Activated CD4-positive, alpha-beta T cell treated with anti-CD3 and anti-CD28 coated beads for 36 hours (primary cell): ENCODE measurements at regions of chr10 and their contacts with region 1.

Region 1: DNA sequence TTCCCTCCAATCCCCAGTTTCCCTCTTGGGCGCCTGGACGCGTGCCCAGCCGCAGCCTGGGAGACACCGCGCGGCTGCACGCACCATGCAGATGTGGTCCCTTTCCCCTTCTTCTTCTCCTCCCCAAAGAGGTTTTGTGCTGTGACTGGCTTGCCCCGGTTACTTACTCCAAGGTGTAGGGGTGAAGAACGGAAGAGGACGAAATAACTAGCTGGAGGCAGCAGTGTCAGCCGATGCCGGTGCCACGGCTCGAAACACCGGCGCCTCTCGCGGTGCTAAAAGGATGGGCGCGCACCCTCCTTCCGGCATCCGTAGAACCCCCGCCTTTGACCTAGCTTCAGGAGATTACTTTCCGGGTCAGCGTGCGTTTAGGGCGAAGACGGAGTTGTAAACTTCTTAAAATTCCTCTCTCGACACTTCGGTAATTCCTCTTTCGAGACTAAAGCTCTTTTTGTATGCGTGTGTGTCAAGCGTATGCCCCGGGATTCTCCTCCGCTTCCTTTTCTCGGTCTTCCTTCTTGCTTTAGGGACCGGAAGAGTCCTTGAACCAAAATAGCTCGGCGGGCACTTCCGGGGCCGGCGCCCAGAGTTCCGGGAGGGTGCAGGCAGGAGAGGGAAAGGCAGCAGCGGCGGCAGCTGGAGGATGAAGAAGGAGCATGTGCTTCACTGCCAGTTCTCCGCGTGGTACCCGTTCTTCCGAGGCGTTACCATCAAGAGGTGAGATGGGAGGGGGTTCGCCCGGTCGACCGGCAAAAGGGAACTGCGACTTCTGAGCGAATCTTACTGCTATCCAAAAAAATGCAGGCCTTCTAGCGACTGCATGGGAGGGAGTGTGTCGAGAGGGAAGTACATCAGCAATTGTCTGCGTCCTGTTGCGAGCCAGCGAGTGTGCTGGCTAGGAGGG is at the starts of genes CDC123 and NUDT5:
- DNase-seq: peak; percentile 94
- ATAC-seq: peak; percentile 94
- H3K4me3 Mint-ChIP-seq: peak within 1 kb of the TSS; percentile 96
- H3K27ac Mint-ChIP-seq: peak within 1 kb of the TSS; percentile 97
- H3K4me1 Mint-ChIP-seq: peaks cover 42% of the 10 kb centered on the region
- H3K27me3 Mint-ChIP-seq: no peaks in the 10 kb centered on the region
- total RNA-seq, gene CDC123: 129 to 151 TPM
- total RNA-seq, gene NUDT5: 99.9 to 108 TPM

Region 2: DNA sequence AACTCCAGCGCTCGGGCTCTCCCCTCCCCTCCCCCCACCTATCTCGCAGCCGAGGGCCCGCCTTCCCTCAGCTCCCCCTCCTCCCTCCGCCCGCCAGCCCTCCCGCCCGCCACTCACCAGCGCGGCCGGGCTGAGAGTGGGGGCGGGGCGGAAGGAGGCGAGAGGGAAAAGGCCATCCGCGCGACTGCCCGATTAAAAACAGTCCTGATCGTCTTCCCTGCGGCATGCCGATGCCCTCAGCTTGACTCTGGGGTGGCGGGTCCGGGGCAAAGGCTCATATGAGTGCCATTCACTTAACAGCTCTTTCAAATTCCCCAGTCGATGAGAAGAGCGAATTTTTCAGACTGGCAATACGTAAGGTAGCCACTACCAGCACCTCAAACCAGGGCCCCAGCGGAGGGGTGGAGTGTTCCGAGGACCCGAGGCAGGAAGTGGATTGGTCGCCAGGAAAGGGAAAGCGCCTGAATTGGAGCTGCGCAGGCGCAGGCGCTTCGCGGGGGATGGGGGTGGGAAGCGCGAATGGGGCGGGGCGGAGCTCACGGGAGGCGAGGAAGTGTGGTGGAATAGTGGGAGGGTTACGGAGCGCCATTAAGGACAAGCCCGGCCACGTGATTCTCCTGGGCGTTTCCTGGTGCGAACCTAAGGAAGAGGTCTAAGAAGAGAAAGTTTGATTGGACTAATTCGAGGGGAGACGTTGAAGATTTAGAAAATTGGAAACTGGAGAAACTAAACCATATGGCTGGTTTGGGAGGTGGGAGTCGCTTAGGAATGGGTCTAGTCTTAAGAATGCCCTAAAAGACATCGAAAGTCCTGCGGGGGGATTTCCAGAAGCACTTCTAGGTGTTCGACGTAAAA is 152.8 kb before region 1 on chr10 and contains the start of gene UPF2:
- CTCF ChIA-PET with region 1: interaction called, 7 read pairs
- POLR2A ChIA-PET with region 1: interaction called, 7 read pairs
- intact Hi-C with region 1: loop called (anchors 1 to 2 kb)
- DNase-seq: peak; percentile 99
- ATAC-seq: peak; percentile 90
- H3K4me3 Mint-ChIP-seq: peak within 1 kb of the TSS; percentile 99
- H3K27ac Mint-ChIP-seq: peak within 1 kb of the TSS; percentile 100
- H3K4me1 Mint-ChIP-seq: peaks cover 37% of the 10 kb centered on the region
- H3K27me3 Mint-ChIP-seq: peaks cover 2% of the 10 kb centered on the region
- total RNA-seq, gene UPF2: 34.2 to 46.8 TPM

Region 3: GRCh38 chr10:12129222-12130111 is 66.4 kb before region 1 on chr10 and contains the start of gene SEC61A2:
- CTCF ChIA-PET with region 1: interaction called, 3 read pairs
- POLR2A ChIA-PET with region 1: interaction called, 5 read pairs
- intact Hi-C with region 1: loop called (anchors 1 kb)
- DNase-seq: peak; percentile 99
- ATAC-seq: peak; percentile 96
- H3K4me3 Mint-ChIP-seq: peak within 1 kb of the TSS; percentile 81
- H3K27ac Mint-ChIP-seq: peak within 1 kb of the TSS; percentile 76
- H3K4me1 Mint-ChIP-seq: peaks cover 19% of the 10 kb centered on the region
- H3K27me3 Mint-ChIP-seq: no peaks in the 10 kb centered on the region
- total RNA-seq, gene SEC61A2: 11.3 to 12.0 TPM

Region 4: DNA sequence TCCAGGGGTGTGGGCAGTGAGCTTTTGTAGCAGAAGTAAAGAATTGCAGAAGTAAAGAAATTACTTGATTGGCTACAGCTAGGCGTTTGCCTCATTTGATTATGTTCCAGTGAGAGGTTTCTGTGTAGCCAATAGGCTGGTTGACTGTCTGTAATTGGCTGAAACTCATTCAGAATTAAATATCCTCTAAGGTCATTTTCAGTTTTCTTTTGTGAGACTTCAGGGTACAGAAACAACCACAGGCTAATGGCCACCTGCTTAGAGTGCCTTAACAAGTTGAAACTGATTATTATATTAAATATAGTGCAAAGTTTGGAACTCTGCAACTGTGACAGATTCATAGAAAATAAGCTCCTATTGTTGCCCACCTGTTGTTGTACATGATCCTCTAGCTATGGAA is 55.8 kb before region 1 on chr10:
- CTCF ChIA-PET with region 1: no interaction called
- POLR2A ChIA-PET with region 1: no interaction called
- intact Hi-C with region 1: no loop called
- DNase-seq: no peak
- ATAC-seq: no peak
- H3K4me3 Mint-ChIP-seq: no peak overlapping the region
- H3K27ac Mint-ChIP-seq: no peak overlapping the region
- H3K4me1 Mint-ChIP-seq: no peaks in the 10 kb centered on the region
- H3K27me3 Mint-ChIP-seq: no peaks in the 10 kb centered on the region

Region 5: DNA sequence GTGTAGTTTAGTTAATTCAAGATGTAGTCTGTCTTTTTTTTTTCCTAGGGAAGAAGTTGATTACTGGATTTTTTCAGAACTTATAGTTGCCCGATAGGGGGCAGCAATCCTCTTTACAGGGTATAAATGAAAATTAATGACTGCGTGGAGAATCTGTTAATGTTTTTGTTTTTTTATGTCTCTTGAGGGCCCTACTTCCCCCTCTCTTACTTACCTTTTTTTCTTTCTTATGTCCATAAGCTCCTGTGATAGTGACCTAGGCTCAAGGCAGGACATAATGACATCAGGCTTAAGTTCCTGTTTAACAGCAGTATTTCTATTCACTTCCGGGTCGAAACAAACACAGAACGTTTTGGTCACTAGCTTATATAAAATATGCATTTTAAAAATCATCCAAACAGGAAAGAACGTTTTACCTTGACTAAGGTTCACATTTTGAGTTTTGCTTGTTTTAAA is 18.9 kb after region 1 on chr10:
- CTCF ChIA-PET with region 1: interaction called, 43 read pairs
- POLR2A ChIA-PET with region 1: interaction called, 3 read pairs
- intact Hi-C with region 1: no loop called
- DNase-seq: peak; percentile 62
- ATAC-seq: peak; percentile 44
- H3K4me3 Mint-ChIP-seq: no peak overlapping the region
- H3K27ac Mint-ChIP-seq: peak overlapping the region; percentile 77
- H3K4me1 Mint-ChIP-seq: peaks cover 17% of the 10 kb centered on the region
- H3K27me3 Mint-ChIP-seq: no peaks in the 10 kb centered on the region

Region 6: GRCh38 chr10:13099666-13100348 is 904.0 kb after region 1 on chr10 and contains the start of gene OPTN:
- CTCF ChIA-PET with region 1: no interaction called
- POLR2A ChIA-PET with region 1: no interaction called
- intact Hi-C with region 1: loop called in 1 of 2 experiments (anchors 5 kb)
- DNase-seq: peak; percentile 87
- ATAC-seq: peak; percentile 80
- H3K4me3 Mint-ChIP-seq: peak within 1 kb of the TSS; percentile 84
- H3K27ac Mint-ChIP-seq: peak within 1 kb of the TSS; percentile 90
- H3K4me1 Mint-ChIP-seq: peaks cover 37% of the 10 kb centered on the region
- H3K27me3 Mint-ChIP-seq: no peaks in the 10 kb centered on the region
- total RNA-seq, gene OPTN: 57.4 to 67.8 TPM

Region 7: DNA sequence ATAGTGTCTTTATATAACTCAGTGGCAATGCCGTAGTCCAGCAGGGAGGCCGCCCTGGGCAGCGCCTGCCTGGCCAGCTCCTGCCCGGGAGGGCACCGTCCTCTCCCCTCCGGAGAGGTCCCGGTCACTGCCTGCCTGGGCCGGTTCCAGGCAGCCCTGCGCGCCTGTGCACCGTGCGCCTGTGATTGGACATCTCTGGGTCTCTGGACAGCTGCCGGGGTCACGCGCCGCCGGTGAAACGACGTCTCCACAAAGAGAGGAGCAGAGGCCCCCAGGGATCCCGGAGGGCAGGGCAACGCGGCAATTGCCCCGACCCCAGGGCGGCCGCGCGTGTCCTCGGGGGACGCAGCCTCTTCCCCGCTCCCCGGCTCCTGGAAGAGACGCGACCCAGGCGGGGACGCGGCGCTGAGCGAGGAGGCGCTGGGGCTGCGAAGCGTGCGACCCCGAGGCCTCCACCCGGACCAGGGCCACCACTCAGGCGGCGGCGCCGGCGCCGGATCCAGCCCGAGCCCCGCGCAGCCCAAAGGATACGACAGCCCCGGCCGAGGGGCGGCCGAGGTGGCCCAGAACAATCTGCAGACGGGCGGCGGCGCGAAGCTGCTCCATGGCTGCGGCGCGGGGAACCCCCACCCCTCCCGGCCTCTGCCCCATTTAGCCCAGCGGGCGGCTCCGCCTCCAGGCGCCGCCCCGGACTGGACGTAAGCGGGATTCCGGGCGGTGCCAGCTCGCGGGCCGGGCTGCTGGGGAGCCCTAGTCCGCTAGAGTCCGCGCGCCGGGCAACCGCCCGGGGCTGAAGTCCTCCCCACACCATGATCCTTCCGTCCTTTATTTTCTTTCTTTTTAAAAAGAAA is 1103.8 kb after region 1 on chr10 and contains the start of gene PHYH:
- CTCF ChIA-PET with region 1: no interaction called
- POLR2A ChIA-PET with region 1: no interaction called
- intact Hi-C with region 1: loop called in 1 of 2 experiments (anchors 5 kb)
- DNase-seq: peak; percentile 87
- ATAC-seq: peak; percentile 65
- H3K4me3 Mint-ChIP-seq: peak within 1 kb of the TSS; percentile 80
- H3K27ac Mint-ChIP-seq: peak within 1 kb of the TSS; percentile 88
- H3K4me1 Mint-ChIP-seq: peaks cover 18% of the 10 kb centered on the region
- H3K27me3 Mint-ChIP-seq: no peaks in the 10 kb centered on the region
- total RNA-seq, gene PHYH: 11.7 to 12.8 TPM

Region 8: GRCh38 chr10:13586676-13587355 is 1391.0 kb after region 1 on chr10 and contains the start of gene PRPF18:
- CTCF ChIA-PET with region 1: no interaction called
- POLR2A ChIA-PET with region 1: no interaction called
- intact Hi-C with region 1: loop called in 1 of 2 experiments (anchors 5 kb)
- DNase-seq: peak; percentile 97
- ATAC-seq: peak; percentile 100
- H3K4me3 Mint-ChIP-seq: peak within 1 kb of the TSS; percentile 99
- H3K27ac Mint-ChIP-seq: peak within 1 kb of the TSS; percentile 95
- H3K4me1 Mint-ChIP-seq: peaks cover 29% of the 10 kb centered on the region
- H3K27me3 Mint-ChIP-seq: peaks cover 8% of the 10 kb centered on the region
- total RNA-seq, gene PRPF18: 21.0 to 22.1 TPM